ENCODE measurements at regions of chr3 and their contacts with region 1.

Region 1: DNA sequence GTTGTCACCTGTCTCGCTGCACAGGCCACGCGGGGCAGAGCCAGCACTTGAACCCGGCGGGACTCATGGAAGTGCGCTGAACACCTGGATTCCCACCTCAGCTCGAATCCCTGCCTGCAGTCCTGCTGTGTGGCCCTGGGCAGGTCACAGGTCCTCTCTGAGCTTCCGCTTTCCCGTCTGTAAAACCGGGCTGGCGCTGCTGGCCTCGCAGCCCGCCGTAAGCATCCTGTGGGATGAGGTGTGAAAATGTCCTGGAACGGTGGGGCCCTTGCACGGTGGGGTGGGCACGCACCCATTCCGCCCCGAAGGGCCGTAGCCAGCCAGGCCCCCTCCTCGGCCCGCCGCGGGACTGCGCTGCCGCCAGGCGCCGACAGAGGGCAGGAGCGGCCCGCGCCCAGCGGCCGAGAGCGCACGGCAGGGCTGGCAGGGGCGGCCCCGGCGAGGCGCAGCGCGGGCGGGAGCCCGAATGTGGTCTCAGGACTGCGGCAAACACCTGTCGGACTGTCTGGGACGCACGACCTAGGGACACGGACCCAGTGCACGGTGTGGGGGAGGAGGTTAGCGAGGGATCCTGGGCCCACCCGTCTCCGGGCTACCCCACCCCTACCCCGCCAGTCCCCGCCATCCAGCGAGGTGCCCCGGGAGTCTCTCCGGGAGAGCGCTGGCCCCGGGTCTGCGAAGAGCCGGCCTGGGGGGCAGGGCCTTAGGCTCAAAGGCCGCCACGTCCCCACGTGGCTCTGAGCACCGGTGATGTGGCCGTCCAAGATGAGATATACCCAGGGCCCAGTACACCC is 40.4 kb downstream of the DNAJB8 start:
- DNase-seq: peak; percentile 41
- H3K4me3 ChIP-seq: peak overlapping the region; percentile 6 to 24
- H3K27ac ChIP-seq: no peak overlapping the region
- H3K4me1 ChIP-seq: no peaks in the 10 kb centered on the region
- H3K27me3 ChIP-seq: no peaks in the 10 kb centered on the region
- CTCF ChIP-seq: peak; percentile 83 to 92 (median 90)
- POLR2A ChIP-seq: no peak

Region 2: GRCh38 chr3:128170805-128171516 is 255.4 kb before region 1 on chr3:
- intact Hi-C with region 1: loop called (anchors 10 kb)
- DNase-seq: peak; percentile 82
- H3K4me3 ChIP-seq: no peak overlapping the region
- H3K27ac ChIP-seq: no peak overlapping the region
- H3K4me1 ChIP-seq: no peaks in the 10 kb centered on the region
- H3K27me3 ChIP-seq: no peaks in the 10 kb centered on the region
- CTCF ChIP-seq: peak; percentile 66 to 77 (median 73)
- POLR2A ChIP-seq: no peak

Region 3: DNA sequence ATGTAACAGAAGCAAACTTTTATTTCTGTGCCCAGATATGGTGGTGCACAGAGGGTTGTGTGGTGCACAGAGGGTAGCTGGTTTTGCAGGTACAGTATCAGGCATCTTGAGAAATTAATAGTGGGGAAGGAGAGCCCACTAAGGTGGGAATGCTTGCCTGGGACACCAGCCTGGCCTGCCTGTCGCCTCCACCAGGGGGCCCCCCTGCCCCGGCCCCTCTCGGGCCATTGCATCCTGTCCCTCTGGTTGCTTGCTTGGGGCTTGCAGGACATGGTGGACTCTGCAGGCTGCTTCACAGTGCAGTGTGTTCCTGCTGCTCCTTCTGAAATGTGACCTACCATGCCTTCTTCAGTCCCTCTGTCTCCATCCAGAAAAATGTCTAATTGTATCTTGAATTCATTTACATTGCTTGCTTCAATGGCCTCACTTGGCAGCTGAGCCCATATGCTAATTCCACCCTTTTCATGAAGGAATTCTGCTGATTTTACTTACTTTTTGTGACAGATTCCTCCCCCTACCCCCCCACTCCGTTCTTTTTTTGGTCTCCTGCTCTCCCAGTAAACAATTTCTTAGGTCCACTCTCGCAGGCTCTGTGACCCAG is 199.4 kb before region 1 on chr3:
- intact Hi-C with region 1: no loop called
- DNase-seq: peak; percentile 36
- H3K4me3 ChIP-seq: no peak overlapping the region
- H3K27ac ChIP-seq: no peak overlapping the region
- H3K4me1 ChIP-seq: peaks cover 7% of the 10 kb centered on the region
- H3K27me3 ChIP-seq: no peaks in the 10 kb centered on the region
- CTCF ChIP-seq: peak in 2 of 3 experiments; percentile 10 to 38
- POLR2A ChIP-seq: no peak

Region 4: GRCh38 chr3:128603811-128604775 is 177.8 kb after region 1 on chr3:
- intact Hi-C with region 1: loop called (anchors 10 kb)
- DNase-seq: no peak
- H3K4me3 ChIP-seq: no peak overlapping the region
- H3K27ac ChIP-seq: no peak overlapping the region
- H3K4me1 ChIP-seq: peaks cover 10% of the 10 kb centered on the region
- H3K27me3 ChIP-seq: no peaks in the 10 kb centered on the region
- CTCF ChIP-seq: no peak
- POLR2A ChIP-seq: no peak

Region 5: DNA sequence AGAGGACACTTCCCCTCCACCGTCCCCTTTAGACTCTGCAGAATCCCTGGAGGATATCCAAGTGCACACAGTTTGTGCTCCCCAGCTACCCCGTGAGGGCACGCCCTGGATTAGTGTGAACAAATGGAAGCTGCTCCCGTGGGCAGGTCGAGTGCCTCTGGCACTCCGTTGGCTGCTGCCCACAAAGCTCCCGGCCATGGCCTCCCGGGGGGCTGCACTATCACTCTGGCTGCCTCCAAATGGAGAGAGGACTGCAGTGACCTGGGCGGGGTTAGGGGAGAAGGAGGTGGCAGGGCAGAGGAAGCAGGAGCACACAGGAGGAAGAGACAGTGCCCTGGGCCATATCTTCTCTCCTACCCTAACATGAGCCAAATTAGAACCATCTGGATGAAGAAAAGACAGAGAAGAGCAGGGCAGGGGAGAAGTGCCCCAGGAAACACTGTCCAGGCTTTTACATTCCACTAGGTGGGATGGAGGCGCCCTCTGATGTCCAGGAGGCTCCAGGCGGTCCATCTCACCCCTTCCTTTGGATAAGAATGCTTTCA is 423.7 kb after region 1 on chr3:
- intact Hi-C with region 1: no loop called
- DNase-seq: no peak
- H3K4me3 ChIP-seq: no peak overlapping the region
- H3K27ac ChIP-seq: no peak overlapping the region
- H3K4me1 ChIP-seq: peaks cover 15% of the 10 kb centered on the region
- H3K27me3 ChIP-seq: no peaks in the 10 kb centered on the region
- CTCF ChIP-seq: no peak
- POLR2A ChIP-seq: no peak

Measured in testis (tissue), 5 donors.